Sigmoid colon (tissue), 7 donors: ENCODE measurements at regions of chr16 and their contacts with region 1.

Region 1: GRCh38 chr16:21523411-21524067 is 75.8 kb upstream of the METTL9 start:
- DNase-seq: no peak
- H3K4me3 ChIP-seq: no peak overlapping the region
- H3K27ac ChIP-seq: no peak overlapping the region
- H3K4me1 ChIP-seq: peaks cover 0 to 17% (median 16%) of the 10 kb centered on the region in 4 donors
- H3K27me3 ChIP-seq: no peaks in the 10 kb centered on the region
- CTCF ChIP-seq: no peak
- EP300 ChIP-seq: no peak
- POLR2A ChIP-seq: no peak

Region 2: DNA sequence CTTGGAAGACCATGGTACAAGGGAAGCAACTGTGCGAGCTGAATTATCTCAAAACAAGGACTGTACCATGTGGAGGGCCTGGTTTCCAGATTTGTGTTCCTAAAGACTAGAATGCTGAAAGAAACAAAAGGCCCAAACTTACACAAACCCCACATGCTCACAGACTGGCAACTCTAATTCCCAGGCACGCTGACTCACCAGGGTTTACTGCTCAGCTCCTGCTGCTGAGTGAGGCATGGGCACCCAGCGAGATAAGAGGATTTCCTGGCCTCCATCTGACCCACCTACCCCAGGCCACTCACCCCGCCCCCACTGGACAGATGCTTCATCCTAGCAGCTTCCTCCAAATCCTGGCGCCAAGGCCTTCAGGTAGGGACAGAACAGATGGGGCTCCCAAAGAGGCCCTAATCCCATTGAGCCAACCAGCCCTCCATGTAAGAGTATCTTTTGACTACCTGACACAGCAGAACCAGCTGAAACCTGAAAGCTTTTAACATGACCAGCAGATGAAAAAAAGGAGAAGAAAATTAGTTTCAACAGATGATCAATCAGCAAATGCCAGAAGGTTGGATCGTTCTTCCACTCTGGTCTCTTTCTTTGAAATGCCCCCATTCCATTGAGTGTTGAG is 657.3 kb before region 1 on chr16:
- intact Hi-C with region 1: loop called (anchors 5 kb)
- DNase-seq: peak; percentile 73
- H3K4me3 ChIP-seq: no peak overlapping the region
- H3K27ac ChIP-seq: peak overlapping the region; percentile 74 to 82 (median 75)
- H3K4me1 ChIP-seq: peaks cover 0 to 83% (median 75%) of the 10 kb centered on the region in 4 donors
- H3K27me3 ChIP-seq: no peaks in the 10 kb centered on the region
- CTCF ChIP-seq: no peak
- EP300 ChIP-seq: no peak
- POLR2A ChIP-seq: no peak

Region 3: DNA sequence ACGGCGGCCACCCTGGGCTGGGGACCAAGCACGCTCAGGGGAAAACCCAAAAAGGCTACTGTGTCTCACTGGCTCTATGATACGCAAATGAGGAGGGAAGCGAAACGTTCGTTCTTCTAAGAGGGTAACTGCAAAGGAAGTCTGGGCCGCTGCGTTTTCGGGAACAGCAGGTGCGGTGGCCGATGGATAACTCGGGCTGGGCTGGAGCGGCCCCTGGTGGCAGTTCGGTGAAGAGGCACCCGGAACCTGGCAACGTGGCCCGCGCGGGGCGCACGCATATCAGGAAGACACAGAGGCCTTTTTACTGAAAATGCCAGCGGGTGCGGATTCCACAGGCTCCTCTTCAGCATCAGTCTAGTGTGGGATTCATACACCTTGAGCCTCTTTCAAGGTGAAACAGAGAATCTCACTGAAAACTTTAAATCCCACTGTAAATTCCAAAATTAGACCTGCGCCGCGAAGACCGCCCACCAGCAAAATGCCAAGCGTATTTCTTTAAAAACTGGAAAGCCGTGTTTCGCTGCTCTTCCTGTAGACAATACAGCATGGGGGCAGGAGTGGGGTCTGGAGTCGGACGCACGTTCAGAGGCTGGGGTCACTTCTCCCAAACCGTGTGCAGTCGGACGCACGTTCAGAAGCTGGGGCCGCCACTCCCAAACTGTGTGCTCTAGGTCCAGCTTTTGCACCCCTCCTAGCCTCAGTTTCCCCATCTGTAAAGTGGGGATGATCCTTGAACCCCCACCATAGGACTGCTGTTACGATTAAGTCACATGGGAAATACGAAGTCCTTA is 31.5 kb after region 1 on chr16:
- intact Hi-C with region 1: loop called (anchors 5 kb)
- DNase-seq: peak; percentile 95
- H3K4me3 ChIP-seq: peak overlapping the region in 1 of 4 donors; percentile 21
- H3K27ac ChIP-seq: no peak overlapping the region
- H3K4me1 ChIP-seq: peaks cover 0 to 12% (median 10%) of the 10 kb centered on the region in 4 donors
- H3K27me3 ChIP-seq: peaks cover 0 to 9% (median 0%) of the 10 kb centered on the region in 3 donors
- CTCF ChIP-seq: peak; percentile 98 to 100 (median 99)
- EP300 ChIP-seq: no peak
- POLR2A ChIP-seq: no peak

Region 4: GRCh38 chr16:22217889-22218730 is 694.6 kb after region 1 on chr16:
- intact Hi-C with region 1: loop called (anchors 10 kb)
- DNase-seq: peak; percentile 82
- H3K4me3 ChIP-seq: no peak overlapping the region
- H3K27ac ChIP-seq: peak overlapping the region; percentile 25 to 72 (median 60)
- H3K4me1 ChIP-seq: peaks cover 0 to 71% (median 61%) of the 10 kb centered on the region in 4 donors
- H3K27me3 ChIP-seq: no peaks in the 10 kb centered on the region
- CTCF ChIP-seq: no peak
- EP300 ChIP-seq: no peak
- POLR2A ChIP-seq: no peak